A673 (cell line): ENCODE measurements at regions of chr11 and their contacts with region 1.

Region 1: GRCh38 chr11:114774599-114775361 is 96.5 kb downstream of the NXPE2 start:
- DNase-seq: peak; percentile 69
- H3K4me3 ChIP-seq: no peak overlapping the region
- H3K27ac ChIP-seq: no peak overlapping the region
- H3K4me1 ChIP-seq: no peaks in the 10 kb centered on the region
- H3K27me3 ChIP-seq: no peaks in the 10 kb centered on the region
- CTCF ChIP-seq: peak; percentile 95

Region 2: DNA sequence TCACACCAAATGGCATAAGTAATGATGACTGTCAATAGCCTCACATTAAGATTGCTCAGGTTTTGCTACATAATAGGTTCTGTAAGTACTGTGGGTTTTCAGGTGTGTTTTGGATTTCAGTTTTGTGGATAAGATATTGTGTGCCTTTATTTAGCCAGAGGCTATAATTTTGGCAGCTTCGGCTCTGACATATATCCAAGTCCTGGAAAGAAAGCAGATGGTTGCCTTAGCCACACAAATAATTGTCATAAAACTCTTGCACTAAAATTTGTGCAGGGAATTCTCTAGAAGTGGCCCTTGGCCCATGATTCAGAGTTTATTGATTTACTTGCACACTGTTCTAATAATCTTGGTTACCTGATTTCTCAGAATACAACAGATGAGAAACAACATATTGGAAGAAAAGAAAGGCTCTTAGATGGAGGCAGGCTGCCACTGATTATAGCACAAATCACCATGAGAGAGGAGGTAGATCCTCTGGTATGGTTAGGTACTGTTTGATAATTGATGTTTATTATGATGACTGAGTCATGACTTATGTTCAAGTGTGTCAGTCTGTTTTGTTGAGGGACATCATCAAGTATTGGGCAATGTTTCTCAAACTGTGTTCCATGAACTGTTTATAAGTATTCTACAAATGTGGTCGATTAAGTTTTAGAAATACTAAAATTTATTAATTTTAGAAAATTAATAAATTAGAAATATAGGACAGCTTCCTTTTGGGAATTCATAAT is 325.9 kb before region 1 on chr11:
- CTCF ChIA-PET with region 1: no interaction called
- POLR2A ChIA-PET with region 1: no interaction called
- intact Hi-C with region 1: no loop called
- DNase-seq: no peak
- H3K4me3 ChIP-seq: no peak overlapping the region
- H3K27ac ChIP-seq: peak overlapping the region; percentile 67
- H3K4me1 ChIP-seq: peaks cover 11% of the 10 kb centered on the region
- H3K27me3 ChIP-seq: no peaks in the 10 kb centered on the region
- CTCF ChIP-seq: no peak

Region 3: DNA sequence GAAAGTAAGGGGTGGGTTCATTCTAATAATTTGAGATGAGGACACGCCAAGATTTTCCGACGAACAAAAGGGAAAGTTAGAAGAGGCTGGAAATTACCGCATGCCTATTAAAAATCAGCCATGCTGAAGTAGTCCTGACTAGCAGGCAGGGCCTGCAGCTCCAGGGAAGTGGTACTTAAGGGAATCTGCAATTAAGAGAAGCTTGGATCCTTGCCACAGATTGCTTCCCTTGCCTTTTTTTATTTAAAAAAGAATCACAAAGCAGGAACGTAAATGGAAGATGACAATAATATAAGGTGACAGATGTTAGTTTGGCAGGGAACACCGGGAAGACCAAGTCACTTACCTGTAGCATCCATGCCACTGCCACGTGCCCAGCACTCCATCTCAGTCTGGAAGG is 370.1 kb after region 1 on chr11:
- CTCF ChIA-PET with region 1: no interaction called
- POLR2A ChIA-PET with region 1: no interaction called
- intact Hi-C with region 1: loop called (anchors 10 kb)
- DNase-seq: no peak
- H3K4me3 ChIP-seq: no peak overlapping the region
- H3K27ac ChIP-seq: no peak overlapping the region
- H3K4me1 ChIP-seq: no peaks in the 10 kb centered on the region
- H3K27me3 ChIP-seq: peaks cover 5% of the 10 kb centered on the region
- CTCF ChIP-seq: no peak

Region 4: GRCh38 chr11:116276051-116277044 is 1501.6 kb after region 1 on chr11:
- CTCF ChIA-PET with region 1: no interaction called
- POLR2A ChIA-PET with region 1: no interaction called
- intact Hi-C with region 1: loop called (anchors 10 kb)
- DNase-seq: peak; percentile 60
- H3K4me3 ChIP-seq: no peak overlapping the region
- H3K27ac ChIP-seq: no peak overlapping the region
- H3K4me1 ChIP-seq: no peaks in the 10 kb centered on the region
- H3K27me3 ChIP-seq: no peaks in the 10 kb centered on the region
- CTCF ChIP-seq: peak; percentile 90